ENCODE measurements at regions of chrX and their contacts with region 1.

Region 1: DNA sequence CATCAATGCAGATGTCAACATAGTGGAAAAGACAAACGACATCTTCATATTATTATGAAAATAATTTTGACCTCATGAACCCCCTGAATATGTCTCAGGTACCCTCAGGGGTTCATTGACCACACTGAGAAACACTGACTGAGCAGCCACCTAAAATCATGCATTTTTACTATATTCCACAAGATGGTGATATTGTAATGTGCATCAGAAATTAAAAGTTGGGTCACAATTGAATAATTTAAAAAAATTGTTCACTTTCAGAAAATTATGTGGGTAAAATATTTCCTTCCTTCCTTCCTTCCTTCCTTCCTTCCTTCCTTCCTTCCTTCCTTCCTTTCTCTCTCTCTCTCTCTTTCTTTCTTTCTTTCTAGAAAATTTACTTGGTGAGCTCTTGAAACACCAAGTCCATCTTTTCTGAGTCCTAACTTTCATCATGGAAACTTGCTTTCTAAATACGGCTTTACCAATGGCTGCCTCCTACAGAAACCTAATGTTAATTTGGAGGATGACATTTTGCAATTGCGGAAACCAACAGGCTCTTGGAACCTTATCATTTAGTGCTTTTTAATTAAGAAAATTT is 103.6 kb downstream of the RTL3 start:
- DNase-seq: no peak
- ATAC-seq: no peak
- H3K4me3 ChIP-seq: no peak overlapping the region
- H3K27ac ChIP-seq: no peak overlapping the region
- H3K4me1 ChIP-seq: no peaks in the 10 kb centered on the region
- H3K27me3 ChIP-seq: no peaks in the 10 kb centered on the region

Region 2: GRCh38 chrX:78759081-78759480 is 203.6 kb after region 1 on chrX:
- intact Hi-C with region 1: no loop called
- DNase-seq: no peak
- ATAC-seq: no peak
- H3K4me3 ChIP-seq: no peak overlapping the region
- H3K27ac ChIP-seq: no peak overlapping the region
- H3K4me1 ChIP-seq: no peaks in the 10 kb centered on the region
- H3K27me3 ChIP-seq: no peaks in the 10 kb centered on the region

Region 3: DNA sequence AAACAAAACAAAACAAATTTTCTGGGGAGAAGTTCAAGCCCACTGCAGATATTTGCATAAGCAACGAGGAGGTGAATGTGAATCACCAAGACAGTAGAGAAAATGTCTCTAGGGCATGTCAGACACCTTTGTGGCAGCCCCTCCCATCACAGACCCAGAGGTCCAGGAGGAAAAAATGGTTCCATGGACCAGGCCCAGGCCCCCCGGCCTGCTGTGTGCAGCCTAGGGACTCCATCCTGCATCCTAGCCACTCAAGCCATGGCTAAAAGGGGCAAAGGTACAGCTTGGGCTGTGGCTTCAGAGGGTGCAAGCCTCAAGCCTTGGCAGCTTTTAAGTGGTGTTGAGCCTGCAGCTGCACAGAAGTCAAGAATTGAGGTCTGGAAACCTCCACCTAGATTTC is 246.0 kb after region 1 on chrX:
- intact Hi-C with region 1: no loop called
- DNase-seq: no peak
- ATAC-seq: no peak
- H3K4me3 ChIP-seq: no peak overlapping the region
- H3K27ac ChIP-seq: no peak overlapping the region
- H3K4me1 ChIP-seq: no peaks in the 10 kb centered on the region
- H3K27me3 ChIP-seq: no peaks in the 10 kb centered on the region

Region 4: GRCh38 chrX:78886550-78886949 is 331.1 kb after region 1 on chrX:
- intact Hi-C with region 1: loop called in 1 of 2 experiments (anchors 10 kb)
- DNase-seq: no peak
- ATAC-seq: peak; percentile 54
- H3K4me3 ChIP-seq: no peak overlapping the region
- H3K27ac ChIP-seq: no peak overlapping the region
- H3K4me1 ChIP-seq: no peaks in the 10 kb centered on the region
- H3K27me3 ChIP-seq: no peaks in the 10 kb centered on the region

Region 5: DNA sequence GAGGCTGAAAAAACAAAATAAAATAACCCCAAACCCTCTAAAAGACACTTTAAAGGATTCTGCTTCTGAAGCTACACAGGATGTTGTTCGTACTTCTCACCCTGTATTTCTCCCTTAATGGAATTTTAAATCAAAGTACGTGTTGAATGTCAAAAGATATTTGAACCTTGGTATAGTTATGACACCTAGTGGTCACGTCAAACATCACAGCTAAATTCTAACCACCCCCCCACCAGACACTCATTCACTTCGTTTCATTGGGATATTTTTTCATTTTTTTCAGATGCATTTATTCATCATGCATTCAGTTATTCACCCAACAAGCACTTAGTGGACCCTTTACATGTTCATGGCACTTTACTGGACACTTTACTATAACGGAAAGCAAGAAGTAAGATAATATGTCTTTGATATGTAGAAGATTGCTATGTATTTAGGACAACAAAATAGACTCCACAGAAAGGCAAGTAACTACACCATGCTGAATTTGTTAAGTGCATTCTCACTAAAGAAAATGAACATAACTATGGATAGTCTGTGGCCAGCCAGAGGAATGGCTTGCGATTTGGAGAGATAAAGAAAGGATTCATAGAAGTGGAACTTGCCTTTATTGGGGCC is 526.5 kb after region 1 on chrX:
- intact Hi-C with region 1: loop called in 1 of 2 experiments (anchors 10 kb)
- DNase-seq: no peak
- ATAC-seq: no peak
- H3K4me3 ChIP-seq: no peak overlapping the region
- H3K27ac ChIP-seq: no peak overlapping the region
- H3K4me1 ChIP-seq: no peaks in the 10 kb centered on the region
- H3K27me3 ChIP-seq: no peaks in the 10 kb centered on the region